Activated B cell treated with CpG ODN at 0.5 μM for 24 hours (primary cell): ENCODE measurements at regions of chr3 and their contacts with region 1.

Region 1: DNA sequence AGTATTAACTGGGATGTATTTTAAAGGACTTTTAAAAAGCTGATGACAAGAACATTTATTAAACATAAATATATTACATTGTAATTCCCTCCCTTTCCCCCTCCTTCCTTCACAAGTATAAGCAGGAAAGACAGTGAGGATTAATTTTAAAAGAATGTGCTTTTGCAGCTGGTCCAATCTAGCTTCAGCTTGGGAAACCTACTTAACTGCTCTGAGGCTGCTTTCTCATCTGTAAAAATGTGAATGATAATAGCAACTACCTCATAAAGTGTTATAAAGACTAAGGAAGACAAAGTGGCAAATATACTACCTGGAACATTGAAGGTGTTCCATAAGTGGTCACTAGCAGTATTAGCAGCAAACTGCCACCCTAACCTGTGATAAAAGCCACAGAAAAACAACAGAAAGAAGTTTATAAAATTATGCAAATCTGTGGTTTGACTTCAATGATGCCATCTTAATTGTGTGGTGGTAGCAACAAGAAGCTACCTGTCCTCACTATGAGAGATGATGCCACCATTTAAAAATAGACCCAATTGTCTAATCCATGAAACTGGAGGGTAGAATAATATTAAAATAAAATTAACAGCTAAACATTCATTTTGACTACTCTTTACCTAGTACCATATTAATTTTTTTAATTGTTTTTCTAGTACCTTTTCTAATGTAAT is 20.0 kb downstream of the DHX36 start:
- DNase-seq: no peak
- ATAC-seq: no peak
- H3K4me3 Mint-ChIP-seq: no peak overlapping the region
- H3K27ac Mint-ChIP-seq: no peak overlapping the region
- H3K4me1 Mint-ChIP-seq: peaks cover 18% of the 10 kb centered on the region
- H3K27me3 Mint-ChIP-seq: no peaks in the 10 kb centered on the region
- CTCF ChIP-seq: no peak

Region 2: DNA sequence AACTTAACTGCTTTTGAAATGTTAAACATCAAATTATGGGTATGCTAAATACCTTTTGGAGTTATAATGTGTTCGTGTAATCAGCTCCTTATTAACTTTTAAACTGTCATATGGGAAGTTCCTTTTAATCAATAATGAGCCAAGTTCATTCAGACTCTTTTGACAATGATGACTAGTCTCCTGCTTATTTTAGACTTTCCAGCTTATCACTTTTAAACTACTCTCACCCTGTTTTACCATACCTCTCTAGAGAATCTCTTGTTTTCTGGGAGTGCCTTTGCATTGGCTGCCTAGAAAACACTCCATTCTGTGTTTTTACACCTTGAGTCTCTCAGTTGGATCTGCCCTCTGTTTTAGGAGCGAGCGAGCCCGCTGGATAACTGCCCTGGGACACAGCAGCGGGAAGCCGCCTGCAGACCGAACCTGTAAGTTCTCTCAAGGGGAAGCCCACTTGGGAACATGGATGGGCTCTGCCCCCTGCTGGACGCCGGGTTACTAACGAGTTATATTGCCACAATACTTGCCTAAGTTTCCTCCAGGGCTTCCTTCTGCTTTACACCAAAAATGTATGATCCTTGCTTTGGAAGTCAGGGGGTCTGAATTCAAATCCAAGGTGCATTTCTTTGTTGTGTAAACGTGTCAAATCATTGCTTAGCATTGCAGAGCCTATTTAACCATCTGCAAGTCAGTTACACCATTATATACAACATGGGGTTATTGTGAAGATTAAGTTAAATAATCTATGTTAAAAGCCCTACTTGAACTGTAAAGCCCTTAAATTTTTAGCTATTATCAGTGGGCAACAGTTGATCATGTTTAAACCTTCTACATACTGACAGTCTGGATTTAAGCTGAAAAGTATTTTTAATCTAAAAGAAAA is 51.3 kb before region 1 on chr3:
- CTCF ChIA-PET with region 1: no interaction called
- POLR2A ChIA-PET with region 1: no interaction called
- intact Hi-C with region 1: no loop called
- DNase-seq: peak; percentile 47
- ATAC-seq: peak; percentile 79
- H3K4me3 Mint-ChIP-seq: no peak overlapping the region
- H3K27ac Mint-ChIP-seq: no peak overlapping the region
- H3K4me1 Mint-ChIP-seq: peaks cover 3% of the 10 kb centered on the region
- H3K27me3 Mint-ChIP-seq: no peaks in the 10 kb centered on the region
- CTCF ChIP-seq: peak; percentile 64

Region 3: GRCh38 chr3:154285221-154285620 is 19.0 kb before region 1 on chr3:
- CTCF ChIA-PET with region 1: no interaction called
- POLR2A ChIA-PET with region 1: no interaction called
- intact Hi-C with region 1: loop called (anchors 2 kb)
- DNase-seq: no peak
- ATAC-seq: no peak
- H3K4me3 Mint-ChIP-seq: no peak overlapping the region
- H3K27ac Mint-ChIP-seq: no peak overlapping the region
- H3K4me1 Mint-ChIP-seq: peaks cover 5% of the 10 kb centered on the region
- H3K27me3 Mint-ChIP-seq: no peaks in the 10 kb centered on the region
- CTCF ChIP-seq: no peak

Region 4: DNA sequence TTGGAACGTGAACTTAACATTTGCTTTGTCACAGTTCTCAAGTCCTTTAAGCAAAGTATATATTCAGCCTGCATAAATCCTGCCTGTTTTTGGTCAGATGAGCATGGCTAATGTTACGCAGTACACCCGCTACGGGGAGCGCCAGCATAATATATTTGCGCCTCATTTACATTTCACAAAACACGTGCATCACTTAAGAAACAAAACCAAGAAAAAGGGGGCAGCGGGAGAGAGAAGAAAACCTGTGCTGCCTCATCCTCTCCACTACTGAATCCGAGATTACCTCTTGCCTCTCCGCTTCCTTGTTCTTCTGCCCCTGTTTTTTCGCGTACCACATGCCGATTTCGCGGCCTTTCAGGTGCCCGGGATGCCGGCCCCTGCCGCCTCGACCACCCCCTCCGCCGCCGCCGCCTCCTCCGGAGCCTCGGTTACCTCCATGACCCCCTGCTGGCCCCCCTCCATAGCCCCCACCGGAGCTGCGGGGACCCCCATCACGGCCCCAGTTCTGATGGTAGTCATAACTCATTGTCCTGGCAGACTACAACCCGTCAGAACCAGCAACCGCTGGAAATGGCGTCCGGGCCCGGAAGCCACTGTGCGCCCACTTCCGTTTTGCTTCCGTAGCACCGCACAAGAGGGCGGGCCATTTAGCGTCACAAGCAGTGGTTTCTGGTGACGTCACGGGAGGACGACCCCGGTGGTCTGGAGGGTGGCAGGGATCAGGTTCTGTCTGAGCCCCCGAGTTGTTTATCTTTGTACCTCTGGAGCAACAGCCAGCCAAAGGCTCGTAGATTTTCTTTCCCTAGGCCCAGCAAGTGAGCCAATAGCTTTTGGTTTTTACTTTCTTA is 19.9 kb after region 1 on chr3 and contains the start of gene DHX36:
- CTCF ChIA-PET with region 1: no interaction called
- POLR2A ChIA-PET with region 1: interaction called, 3 read pairs
- intact Hi-C with region 1: loop called (anchors 2 kb)
- DNase-seq: peak; percentile 83
- ATAC-seq: peak; percentile 88
- H3K4me3 Mint-ChIP-seq: peak within 1 kb of the TSS; percentile 95
- H3K27ac Mint-ChIP-seq: peak within 1 kb of the TSS; percentile 97
- H3K4me1 Mint-ChIP-seq: peaks cover 31% of the 10 kb centered on the region
- H3K27me3 Mint-ChIP-seq: no peaks in the 10 kb centered on the region
- CTCF ChIP-seq: no peak
- total RNA-seq, gene DHX36: 95.9 and 110 TPM in 2 replicates